CD4-positive, alpha-beta memory T cell (primary cell): ENCODE measurements at regions of chr12 and their contacts with region 1.

Region 1: DNA sequence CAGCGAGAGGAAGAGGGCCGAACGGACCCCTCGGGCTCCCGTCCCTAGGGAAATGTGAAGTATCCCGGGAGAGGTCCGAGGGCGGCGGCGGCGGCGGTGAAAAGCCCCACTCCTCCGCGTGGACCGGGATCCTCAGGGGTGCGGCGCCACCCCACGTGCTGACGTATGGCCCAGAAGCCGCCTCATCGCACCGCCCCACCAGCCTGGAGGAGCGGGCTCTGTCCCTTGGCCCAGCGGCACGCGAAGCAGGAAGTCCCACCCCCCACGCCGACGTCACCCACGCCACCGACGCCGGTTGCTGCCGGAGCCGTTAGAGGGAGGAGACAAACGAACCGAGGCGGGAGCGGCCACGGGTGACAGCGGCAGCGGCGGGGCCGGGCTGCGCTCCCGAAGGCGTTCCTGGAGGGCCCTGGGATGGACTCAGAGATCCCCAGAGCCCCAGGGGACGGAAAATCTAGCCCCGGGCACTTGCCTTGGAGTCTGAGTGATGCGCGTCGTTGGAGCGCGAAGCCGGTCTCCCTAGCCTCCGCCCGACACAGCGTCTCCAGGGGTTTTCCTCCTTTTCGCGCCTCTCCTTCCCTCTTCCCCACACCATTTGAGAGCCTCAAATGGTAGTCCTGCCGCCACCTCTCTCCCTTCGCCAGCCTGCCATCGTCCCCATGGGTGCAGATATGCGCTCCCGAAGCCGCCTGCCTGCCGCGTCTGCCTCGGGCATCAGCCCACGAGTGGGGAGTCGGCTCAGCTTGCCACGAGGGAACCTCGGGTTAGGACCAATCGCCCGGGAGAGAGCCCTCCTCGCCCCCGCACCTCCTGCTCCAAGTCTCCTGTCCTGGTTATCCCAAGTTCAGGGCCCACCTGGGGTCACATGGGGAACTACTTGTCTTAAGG is at the start of gene CEP83:
- DNase-seq: peak; percentile 93 to 97 (median 95)
- H3K4me3 ChIP-seq: peak within 1 kb of the TSS; percentile 89 to 98
- H3K4me3 Mint-ChIP-seq: peak within 1 kb of the TSS; percentile 94 to 98 (median 96)
- H3K27ac ChIP-seq: peak within 1 kb of the TSS; percentile 82
- H3K27ac Mint-ChIP-seq: peak within 1 kb of the TSS; percentile 93 to 98 (median 96)
- H3K4me1 ChIP-seq: peaks cover 15% of the 10 kb centered on the region
- H3K4me1 Mint-ChIP-seq: peaks cover 17 to 47% (median 25%) of the 10 kb centered on the region in 4 donors
- H3K27me3 ChIP-seq: no peaks in the 10 kb centered on the region
- H3K27me3 Mint-ChIP-seq: peaks cover 8% of the 10 kb centered on the region in 2 donors
- total RNA-seq, gene CEP83: 11.2 to 14.8 TPM

Region 2: DNA sequence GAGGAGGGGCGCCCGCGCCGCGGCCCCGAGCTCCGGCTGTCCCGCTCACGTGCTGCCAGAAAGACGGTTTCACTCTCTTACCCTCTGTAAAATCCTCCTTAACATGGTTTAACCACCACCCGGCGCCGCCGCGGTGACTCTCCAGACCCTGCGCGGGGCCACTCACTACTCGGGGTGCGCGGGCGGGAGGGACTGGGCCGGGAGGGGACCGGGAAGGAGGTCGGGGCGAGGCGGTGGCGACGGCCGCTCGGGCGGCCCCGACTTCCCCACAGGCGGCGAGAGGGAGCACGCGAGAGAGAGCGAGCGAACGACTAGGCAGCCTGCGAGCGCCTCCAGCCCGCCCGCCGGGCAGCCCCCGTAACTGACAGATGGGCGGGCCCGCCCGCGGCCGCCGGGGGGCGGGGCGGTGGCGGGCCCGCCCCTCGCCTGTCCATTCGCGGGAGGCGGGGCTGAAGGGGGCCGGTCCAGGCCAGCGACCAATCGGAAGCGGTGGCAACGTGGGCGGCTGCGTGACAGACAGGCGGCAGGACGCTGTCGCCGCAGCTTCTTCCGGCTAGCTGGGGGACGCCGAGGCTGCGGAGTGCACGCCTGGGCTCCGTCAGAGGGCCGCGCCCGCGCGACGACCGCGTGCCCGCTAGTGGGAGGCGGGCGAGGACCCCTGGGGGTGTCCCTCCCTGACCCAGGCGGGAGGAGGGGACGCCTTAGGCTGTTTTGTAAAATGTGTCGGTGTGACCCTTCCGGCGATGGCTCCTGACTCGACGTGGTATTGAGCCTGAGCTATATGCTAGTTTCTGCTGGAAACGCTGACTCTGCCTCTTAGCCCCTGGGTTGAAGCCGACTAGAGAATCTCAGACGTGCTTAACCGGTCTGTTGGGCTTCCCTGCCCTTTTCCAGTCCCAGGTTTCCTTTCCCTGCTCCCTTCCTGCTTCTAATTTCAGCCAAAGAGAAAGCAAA is 1530.7 kb before region 1 on chr12 and contains the start of gene EEA1:
- CTCF ChIA-PET with region 1: no interaction called
- POLR2A ChIA-PET with region 1: no interaction called
- intact Hi-C with region 1: loop called (anchors 5 kb)
- DNase-seq: peak; percentile 92 to 94 (median 94)
- H3K4me3 ChIP-seq: peak within 1 kb of the TSS; percentile 57 to 59
- H3K4me3 Mint-ChIP-seq: peak within 1 kb of the TSS; percentile 89 to 94 (median 92)
- H3K27ac ChIP-seq: peak within 1 kb of the TSS; percentile 90
- H3K27ac Mint-ChIP-seq: peak within 1 kb of the TSS; percentile 87 to 98 (median 95)
- H3K4me1 ChIP-seq: peaks cover 28% of the 10 kb centered on the region
- H3K4me1 Mint-ChIP-seq: peaks cover 21 to 38% (median 32%) of the 10 kb centered on the region in 4 donors
- H3K27me3 ChIP-seq: no peaks in the 10 kb centered on the region
- H3K27me3 Mint-ChIP-seq: no peaks in the 10 kb centered on the region
- total RNA-seq, gene EEA1: 16.1 to 16.4 TPM

Region 3: DNA sequence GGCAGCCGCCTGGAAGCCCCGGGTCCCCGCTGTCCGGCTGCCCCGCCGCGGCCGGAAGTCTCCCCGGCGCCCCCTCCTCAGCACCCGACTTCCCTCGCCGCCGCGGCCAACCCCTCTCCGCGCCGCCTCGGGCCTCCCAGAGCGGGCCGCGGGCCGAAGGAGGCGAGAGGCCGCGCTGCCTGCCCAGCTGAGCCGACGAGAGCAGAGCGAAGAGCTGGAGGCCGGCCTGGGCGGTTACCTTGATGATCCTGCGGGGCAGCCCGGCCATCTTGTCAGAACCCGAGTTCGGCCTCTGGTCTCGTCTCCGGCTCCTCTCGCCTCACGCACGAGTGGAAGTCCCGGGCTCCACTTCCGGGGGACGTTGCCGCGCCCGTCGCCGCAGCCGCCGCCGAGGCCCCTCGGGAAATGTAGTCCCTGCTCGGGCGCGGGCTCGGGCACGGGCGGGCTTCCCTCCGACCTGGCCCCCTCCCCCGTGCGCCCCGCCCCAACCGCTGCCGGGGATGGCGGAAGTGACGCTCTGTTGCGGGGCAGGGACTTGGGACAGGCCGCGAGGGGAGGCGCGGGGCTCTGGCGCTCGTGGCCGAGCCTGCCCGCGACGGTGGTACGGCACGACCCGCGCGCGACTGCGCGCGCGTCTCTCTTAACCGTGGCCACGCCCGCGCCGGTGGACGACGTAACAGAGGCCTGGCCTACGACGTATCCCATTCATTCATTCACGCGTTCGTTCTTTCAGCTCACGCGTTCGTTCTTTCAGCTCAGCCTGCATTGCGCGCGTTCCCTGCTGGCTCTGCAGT is 1018.2 kb before region 1 on chr12 and contains the start of gene UBE2N:
- CTCF ChIA-PET with region 1: no interaction called
- POLR2A ChIA-PET with region 1: no interaction called
- intact Hi-C with region 1: loop called (anchors 2 kb)
- DNase-seq: peak; percentile 95 to 97 (median 97)
- H3K4me3 ChIP-seq: peak within 1 kb of the TSS; percentile 90 to 98
- H3K4me3 Mint-ChIP-seq: peak within 1 kb of the TSS; percentile 94 to 98 (median 97)
- H3K27ac ChIP-seq: peak within 1 kb of the TSS; percentile 95
- H3K27ac Mint-ChIP-seq: peak within 1 kb of the TSS; percentile 94 to 100 (median 99)
- H3K4me1 ChIP-seq: peaks cover 48% of the 10 kb centered on the region
- H3K4me1 Mint-ChIP-seq: peaks cover 36 to 51% (median 45%) of the 10 kb centered on the region in 4 donors
- H3K27me3 ChIP-seq: no peaks in the 10 kb centered on the region
- H3K27me3 Mint-ChIP-seq: no peaks in the 10 kb centered on the region
- total RNA-seq, gene UBE2N: 71.2 to 72.8 TPM

Region 4: DNA sequence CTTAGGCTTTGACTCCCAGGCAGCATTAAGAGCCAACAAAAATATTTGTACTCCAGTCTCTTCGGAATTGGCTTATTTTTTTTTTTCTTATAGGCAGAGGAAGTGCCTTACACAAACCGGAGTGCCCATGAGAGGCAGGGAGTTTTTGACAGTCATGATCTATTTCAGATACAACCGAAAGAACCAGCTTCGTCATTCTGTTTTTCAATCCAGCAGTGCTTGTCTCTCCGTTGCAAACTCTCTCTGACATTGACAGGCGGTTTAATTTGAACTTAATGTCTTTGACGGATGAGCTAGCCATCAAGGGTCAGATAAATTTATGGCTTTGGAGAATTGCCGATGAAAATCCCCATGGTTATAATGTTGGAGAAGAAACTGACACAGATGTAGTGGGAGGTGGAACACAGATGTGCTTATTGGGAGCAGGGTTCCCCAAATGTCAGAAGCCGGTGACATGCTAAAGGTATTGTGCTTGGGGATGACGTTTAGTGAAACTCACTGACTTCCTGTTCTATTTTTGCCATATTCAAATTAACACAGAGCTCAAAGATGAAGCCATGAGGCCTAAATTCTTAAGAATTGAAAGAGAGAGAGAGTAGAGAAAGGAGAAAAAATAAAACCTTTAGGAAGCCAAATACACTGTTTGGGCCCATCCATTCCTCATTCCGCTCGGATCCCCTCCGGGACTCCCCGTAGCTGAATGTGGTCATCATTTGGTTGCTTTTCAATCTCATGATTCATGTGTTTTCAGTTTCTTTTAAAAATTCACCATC is 251.9 kb before region 1 on chr12:
- CTCF ChIA-PET with region 1: no interaction called
- POLR2A ChIA-PET with region 1: no interaction called
- intact Hi-C with region 1: loop called (anchors 2 kb)
- DNase-seq: peak; percentile 45 to 69 (median 56)
- H3K4me3 ChIP-seq: peak overlapping the region; percentile 25 to 51
- H3K4me3 Mint-ChIP-seq: peak overlapping the region; percentile 78 to 93 (median 84)
- H3K27ac ChIP-seq: peak overlapping the region; percentile 67
- H3K27ac Mint-ChIP-seq: peak overlapping the region; percentile 89 to 98 (median 96)
- H3K4me1 ChIP-seq: peaks cover 59% of the 10 kb centered on the region
- H3K4me1 Mint-ChIP-seq: peaks cover 47 to 68% (median 55%) of the 10 kb centered on the region in 4 donors
- H3K27me3 ChIP-seq: no peaks in the 10 kb centered on the region
- H3K27me3 Mint-ChIP-seq: no peaks in the 10 kb centered on the region

Region 5: DNA sequence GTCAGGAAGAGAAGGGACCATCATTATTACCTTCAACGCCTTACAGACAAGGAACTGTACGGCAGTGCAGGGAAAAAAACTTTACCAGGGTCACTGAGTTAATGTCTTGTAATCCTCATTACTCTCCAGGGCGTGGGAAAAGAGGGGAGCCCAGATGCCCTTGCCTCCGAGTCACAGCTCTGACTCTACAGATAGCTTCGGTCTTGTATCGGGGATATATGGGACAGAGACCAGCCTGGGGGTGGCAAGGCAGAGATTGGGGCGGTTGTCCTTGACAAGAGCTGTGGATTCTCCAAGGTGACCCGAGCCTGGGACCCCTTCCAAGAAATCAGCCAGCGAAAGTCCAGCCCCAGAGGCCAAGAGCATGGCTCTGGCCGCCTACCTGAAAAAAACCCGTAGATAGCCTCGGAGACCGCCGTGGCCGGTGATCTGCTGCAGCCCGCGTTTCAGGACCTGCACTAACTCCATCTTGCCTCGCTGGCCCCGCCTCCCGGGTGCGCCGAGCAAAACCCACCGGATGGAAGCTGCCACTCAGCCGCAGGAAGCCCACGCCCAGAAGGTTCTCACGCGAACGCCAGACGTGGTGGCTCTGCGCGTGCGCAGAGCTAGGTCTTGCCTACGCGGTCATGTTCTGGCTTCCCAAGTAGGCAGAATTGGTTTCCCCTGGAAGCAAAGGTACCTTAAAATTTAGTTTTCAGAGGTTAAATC is 543.4 kb after region 1 on chr12 and contains the start of gene NDUFA12:
- CTCF ChIA-PET with region 1: no interaction called
- POLR2A ChIA-PET with region 1: interaction called, 5 read pairs
- intact Hi-C with region 1: loop called (anchors 10 kb)
- DNase-seq: peak; percentile 92 to 94 (median 93)
- H3K4me3 ChIP-seq: peak within 1 kb of the TSS; percentile 83 to 96
- H3K4me3 Mint-ChIP-seq: peak within 1 kb of the TSS; percentile 93 to 99 (median 95)
- H3K27ac ChIP-seq: peak within 1 kb of the TSS; percentile 80
- H3K27ac Mint-ChIP-seq: peak within 1 kb of the TSS; percentile 92 to 97 (median 96)
- H3K4me1 ChIP-seq: peaks cover 61% of the 10 kb centered on the region
- H3K4me1 Mint-ChIP-seq: peaks cover 32 to 55% (median 42%) of the 10 kb centered on the region in 4 donors
- H3K27me3 ChIP-seq: no peaks in the 10 kb centered on the region
- H3K27me3 Mint-ChIP-seq: no peaks in the 10 kb centered on the region
- total RNA-seq, gene NDUFA12: 55.5 to 61.5 TPM